ENCODE measurements at regions of chr11 and their contacts with region 1.

Region 1: DNA sequence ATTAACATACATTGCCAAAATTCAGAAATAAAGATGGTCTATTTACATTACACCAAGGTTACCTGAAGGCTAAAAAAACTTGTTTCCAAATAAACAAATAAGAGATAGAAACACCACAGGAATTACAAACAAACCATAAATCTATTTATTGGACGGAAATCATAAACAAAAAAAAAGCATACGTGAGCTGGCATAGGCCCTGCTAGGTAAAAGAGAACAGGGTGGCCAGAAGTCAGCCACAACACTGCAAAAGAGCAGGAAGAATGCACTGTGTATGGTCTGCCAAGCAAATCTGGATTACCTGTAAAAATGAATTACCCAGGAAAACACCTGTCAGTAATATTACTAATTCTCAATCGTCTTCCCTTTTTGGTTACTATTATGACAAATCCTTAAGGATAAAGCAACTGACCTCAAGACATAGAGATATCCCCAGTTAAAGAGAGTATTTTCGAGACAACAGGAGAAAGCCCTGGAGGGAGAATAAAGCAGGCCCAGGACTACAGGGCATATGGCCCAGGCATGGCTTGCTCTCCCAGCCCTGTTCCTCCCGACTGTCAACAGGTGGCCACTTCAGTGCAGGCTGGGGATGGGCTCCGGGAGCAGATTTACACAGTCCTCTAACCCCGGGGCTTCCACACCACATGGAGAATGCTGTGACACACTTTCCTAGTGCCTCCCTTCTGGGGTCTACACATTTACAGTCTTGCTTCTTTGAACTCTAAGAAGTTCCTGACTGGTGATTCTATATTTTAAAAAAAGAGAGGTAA is 18.0 kb downstream of the PPP2R1B start:
- DNase-seq: no peak
- H3K4me3 ChIP-seq: no peak overlapping the region
- CTCF ChIP-seq: no peak

Region 2: GRCh38 chr11:111766093-111766833 is 18.0 kb after region 1 on chr11 and contains the start of gene PPP2R1B:
- CTCF ChIA-PET with region 1: interaction called, 14 read pairs
- POLR2A ChIA-PET with region 1: interaction called, 3 read pairs
- DNase-seq: no peak
- H3K4me3 ChIP-seq: peak within 1 kb of the TSS; percentile 95
- CTCF ChIP-seq: no peak